ENCODE measurements at regions of chr3 and their contacts with region 1.

Region 1: GRCh38 chr3:88003115-88003755 is 55.6 kb downstream of the CGGBP1 start:
- DNase-seq: no peak

Region 2: DNA sequence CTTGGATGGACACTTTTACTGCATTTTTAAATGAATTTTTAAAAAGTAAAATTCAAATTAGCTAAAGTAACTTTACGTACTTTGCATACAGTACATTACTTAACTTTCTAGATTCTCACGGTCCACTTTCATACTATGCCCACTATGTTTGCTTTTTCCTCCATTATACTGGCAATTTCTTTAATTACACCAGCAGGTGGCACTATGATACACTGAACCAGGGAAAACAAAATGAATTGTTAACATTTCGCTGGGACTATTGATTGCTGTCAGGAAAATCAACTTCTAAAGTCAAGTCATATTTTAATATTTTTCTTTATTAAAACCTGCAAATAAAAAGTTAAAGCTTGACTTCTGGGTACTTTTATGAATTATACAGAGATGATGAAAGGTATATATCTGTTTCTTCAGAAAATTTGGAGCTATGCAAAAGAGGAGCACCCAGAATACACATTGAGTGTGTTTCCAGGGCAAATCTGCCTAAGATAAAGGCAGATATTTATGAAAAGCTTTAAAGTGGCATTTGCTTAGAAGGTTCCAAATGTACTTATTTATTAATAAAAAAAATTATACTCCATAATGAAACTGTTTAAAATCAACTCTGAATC is 705.0 kb before region 1 on chr3:
- intact Hi-C with region 1: loop called (anchors 2 kb)
- DNase-seq: no peak

Measured in posterior cingulate gyrus (tissue), 11 donors.